ENCODE measurements at regions of chr5 and their contacts with region 1.

Region 1: GRCh38 chr5:94968507-94969095 is 316.3 kb downstream of the MCTP1 start:
- DNase-seq: peak; percentile 10
- H3K4me3 Mint-ChIP-seq: no peak overlapping the region
- H3K27ac Mint-ChIP-seq: no peak overlapping the region
- H3K4me1 Mint-ChIP-seq: no peaks in the 10 kb centered on the region
- H3K27me3 Mint-ChIP-seq: no peaks in the 10 kb centered on the region

Region 2: GRCh38 chr5:94932259-94932658 is 36.3 kb before region 1 on chr5:
- CTCF ChIA-PET with region 1: no interaction called
- intact Hi-C with region 1: no loop called
- DNase-seq: no peak
- H3K4me3 Mint-ChIP-seq: no peak overlapping the region
- H3K27ac Mint-ChIP-seq: no peak overlapping the region
- H3K4me1 Mint-ChIP-seq: no peaks in the 10 kb centered on the region
- H3K27me3 Mint-ChIP-seq: peaks cover 2% of the 10 kb centered on the region

Region 3: DNA sequence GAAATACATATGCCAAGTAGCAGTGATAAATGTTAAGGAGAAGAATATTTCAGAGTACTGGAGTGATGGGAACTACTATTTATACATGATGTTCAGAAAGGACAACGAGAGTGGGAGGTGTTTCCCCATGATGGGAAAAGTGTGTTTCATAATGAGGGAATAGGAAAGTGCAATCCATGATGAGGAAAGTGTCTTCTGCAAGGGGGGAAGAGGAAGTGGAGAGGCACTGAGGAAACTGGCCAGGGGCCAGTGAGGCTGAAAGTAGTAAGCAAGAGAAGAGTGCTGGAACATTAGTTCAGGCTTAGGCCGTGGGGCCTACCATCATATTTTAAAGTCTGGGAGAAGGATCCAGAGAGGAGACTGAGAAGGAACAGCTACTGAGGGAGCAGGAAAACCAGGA is 22.9 kb before region 1 on chr5:
- CTCF ChIA-PET with region 1: no interaction called
- intact Hi-C with region 1: no loop called
- DNase-seq: no peak
- H3K4me3 Mint-ChIP-seq: no peak overlapping the region
- H3K27ac Mint-ChIP-seq: no peak overlapping the region
- H3K4me1 Mint-ChIP-seq: no peaks in the 10 kb centered on the region
- H3K27me3 Mint-ChIP-seq: no peaks in the 10 kb centered on the region

Region 4: GRCh38 chr5:95238560-95239325 is 270.1 kb after region 1 on chr5:
- CTCF ChIA-PET with region 1: interaction called, 4 read pairs
- intact Hi-C with region 1: loop called (anchors 1 kb)
- DNase-seq: no peak
- H3K4me3 Mint-ChIP-seq: no peak overlapping the region
- H3K27ac Mint-ChIP-seq: no peak overlapping the region
- H3K4me1 Mint-ChIP-seq: no peaks in the 10 kb centered on the region
- H3K27me3 Mint-ChIP-seq: peaks cover 8% of the 10 kb centered on the region

Region 5: GRCh38 chr5:95261437-95262175 is 293.0 kb after region 1 on chr5:
- CTCF ChIA-PET with region 1: interaction called, 6 read pairs
- intact Hi-C with region 1: loop called (anchors 1 kb)
- DNase-seq: peak; percentile 38
- H3K4me3 Mint-ChIP-seq: no peak overlapping the region
- H3K27ac Mint-ChIP-seq: no peak overlapping the region
- H3K4me1 Mint-ChIP-seq: no peaks in the 10 kb centered on the region
- H3K27me3 Mint-ChIP-seq: peaks cover 6% of the 10 kb centered on the region

Region 6: DNA sequence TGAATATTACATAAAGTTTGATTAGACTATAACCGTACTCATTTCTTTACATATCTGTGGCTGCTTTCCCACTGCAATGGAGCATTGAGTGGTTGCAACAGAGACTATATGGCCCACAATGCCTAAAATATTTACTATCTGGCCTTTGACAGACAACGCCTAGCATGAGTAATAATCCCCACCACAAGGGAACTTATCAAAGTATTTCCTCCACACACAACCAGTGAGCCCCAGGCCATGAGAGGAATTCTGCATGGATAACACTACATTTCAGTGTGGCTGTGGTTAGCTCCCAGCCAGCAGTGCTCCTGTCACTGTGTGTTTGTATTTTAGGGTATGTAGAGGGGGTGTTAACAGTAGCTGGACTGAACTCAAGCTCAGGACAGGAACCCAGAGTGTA is 477.4 kb after region 1 on chr5:
- CTCF ChIA-PET with region 1: no interaction called
- intact Hi-C with region 1: loop called (anchors 10 kb)
- DNase-seq: no peak
- H3K4me3 Mint-ChIP-seq: no peak overlapping the region
- H3K27ac Mint-ChIP-seq: no peak overlapping the region
- H3K4me1 Mint-ChIP-seq: no peaks in the 10 kb centered on the region
- H3K27me3 Mint-ChIP-seq: peaks cover 18% of the 10 kb centered on the region

Measured in activated naive CD4-positive, alpha-beta T cell treated with anti-CD3 and anti-CD28 coated beads for 36 hours (primary cell).